Aorta (tissue), 5 donors: ENCODE measurements at regions of chr5 and their contacts with region 1.

Region 1: DNA sequence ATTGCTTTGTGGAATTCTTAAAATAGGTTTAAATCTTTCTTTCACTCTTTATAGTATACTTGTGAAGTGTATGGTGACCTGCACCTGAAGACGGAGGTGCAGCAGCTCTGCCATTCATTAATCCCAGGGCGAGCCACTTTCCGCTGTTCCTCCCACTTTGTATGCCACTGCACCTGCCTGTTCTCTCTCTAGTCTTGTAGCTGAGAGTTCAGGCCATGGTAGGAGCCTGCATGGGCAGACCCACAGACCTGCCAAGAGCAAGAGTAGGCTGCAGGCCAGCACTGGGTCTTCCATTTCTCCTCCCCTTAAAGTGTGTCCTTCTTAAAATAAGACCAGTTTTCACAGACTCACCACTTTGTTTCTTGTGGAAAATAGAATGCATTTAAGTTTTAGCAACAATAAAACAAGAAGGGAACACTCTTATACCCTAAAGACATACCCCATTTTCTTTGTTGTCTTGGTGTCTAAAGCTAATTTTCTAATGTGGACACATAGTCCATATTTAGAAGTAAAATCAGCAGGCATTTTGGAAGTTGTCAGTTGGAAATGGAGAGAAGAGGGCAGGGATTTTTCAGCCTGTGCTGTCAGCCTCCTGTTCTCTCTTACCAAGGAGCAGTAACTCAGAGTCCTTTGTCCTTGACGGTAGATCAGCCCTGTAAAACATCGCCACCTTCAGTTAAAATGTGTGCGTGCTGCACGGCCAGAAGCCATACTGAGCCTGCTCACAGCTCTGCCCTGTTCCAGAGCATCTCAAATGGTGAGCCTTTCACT is 103.2 kb downstream of the SNCAIP start:
- DNase-seq: peak in 1 of 2 donors; percentile 59
- ATAC-seq: peak; percentile 87
- H3K4me3 ChIP-seq: no peak overlapping the region
- H3K27ac ChIP-seq: no peak overlapping the region
- H3K4me1 ChIP-seq: no peaks in the 10 kb centered on the region
- H3K27me3 ChIP-seq: no peaks in the 10 kb centered on the region

Region 2: DNA sequence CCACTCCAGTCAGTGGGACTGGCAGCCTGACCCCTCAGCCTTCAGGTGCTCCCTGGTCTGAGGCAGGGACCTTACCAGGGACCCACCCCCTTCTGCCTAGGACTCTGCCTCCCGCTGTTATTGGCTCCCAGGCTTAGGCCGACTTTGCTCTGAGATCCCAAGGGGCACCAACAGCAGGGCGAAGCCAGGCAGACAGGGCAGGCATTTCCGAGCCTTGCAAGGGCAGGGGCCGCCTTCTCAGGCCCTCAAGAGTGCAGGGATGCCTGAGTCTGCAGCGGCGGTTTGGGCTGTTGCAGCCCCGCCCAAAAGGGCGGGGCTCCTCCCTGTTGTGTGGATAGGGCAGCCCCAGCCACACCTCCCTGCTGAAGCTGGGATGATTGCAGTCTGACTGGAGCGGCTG is 1306.5 kb before region 1 on chr5:
- intact Hi-C with region 1: no loop called
- DNase-seq: peak in 1 of 2 donors; percentile 51
- ATAC-seq: no peak
- H3K4me3 ChIP-seq: no peak overlapping the region
- H3K27ac ChIP-seq: no peak overlapping the region
- H3K4me1 ChIP-seq: no peaks in the 10 kb centered on the region
- H3K27me3 ChIP-seq: no peaks in the 10 kb centered on the region

Region 3: GRCh38 chr5:122192497-122193496 is 222.4 kb before region 1 on chr5:
- intact Hi-C with region 1: loop called (anchors 2 kb)
- DNase-seq: no peak
- ATAC-seq: peak; percentile 68
- H3K4me3 ChIP-seq: no peak overlapping the region
- H3K27ac ChIP-seq: no peak overlapping the region
- H3K4me1 ChIP-seq: no peaks in the 10 kb centered on the region
- H3K27me3 ChIP-seq: no peaks in the 10 kb centered on the region

Region 4: GRCh38 chr5:122291000-122291901 is 124.0 kb before region 1 on chr5:
- intact Hi-C with region 1: loop called in 1 of 2 experiments (anchors 5 kb)
- DNase-seq: no peak
- ATAC-seq: no peak
- H3K4me3 ChIP-seq: no peak overlapping the region
- H3K27ac ChIP-seq: no peak overlapping the region
- H3K4me1 ChIP-seq: no peaks in the 10 kb centered on the region
- H3K27me3 ChIP-seq: no peaks in the 10 kb centered on the region

Region 5: DNA sequence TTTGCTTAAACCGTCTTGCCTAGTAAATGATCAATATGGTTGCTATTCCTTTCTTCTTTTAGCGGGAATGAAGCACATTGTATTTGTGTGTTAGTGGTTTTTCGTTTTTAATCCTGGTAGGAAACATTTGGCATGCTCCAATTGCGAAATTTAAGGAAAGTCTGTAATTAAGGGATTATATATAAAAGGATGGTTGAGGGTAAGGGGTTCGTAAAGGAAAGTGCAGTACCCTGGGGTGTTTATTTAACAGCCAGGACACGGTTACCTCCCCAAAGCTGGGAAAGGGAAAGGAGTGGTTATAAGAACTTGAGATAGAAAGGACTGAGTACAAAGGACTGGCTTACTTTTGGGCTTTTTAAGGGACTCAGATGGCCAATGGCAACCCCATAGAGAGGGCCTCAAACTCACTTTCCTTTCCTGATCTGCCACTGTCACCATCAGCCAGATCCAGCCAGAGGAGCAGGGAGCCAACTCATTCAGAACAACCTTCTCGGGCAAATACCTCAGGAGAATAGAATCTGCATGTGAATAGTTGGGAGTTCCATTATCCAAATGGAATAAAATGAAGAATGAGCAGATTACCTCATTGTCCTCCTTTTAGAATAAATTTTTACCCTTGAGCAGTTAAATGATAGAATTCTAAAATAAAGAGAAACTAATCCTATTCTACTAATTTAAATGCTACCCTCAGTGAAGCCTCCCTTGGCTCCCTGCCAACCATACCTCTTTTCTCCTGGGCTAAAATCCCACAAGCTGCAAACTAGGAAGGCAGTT is 14.5 kb after region 1 on chr5:
- intact Hi-C with region 1: no loop called
- DNase-seq: no peak
- ATAC-seq: no peak
- H3K4me3 ChIP-seq: no peak overlapping the region
- H3K27ac ChIP-seq: no peak overlapping the region
- H3K4me1 ChIP-seq: peaks cover 0 to 4% of the 10 kb centered on the region in 2 donors
- H3K27me3 ChIP-seq: no peaks in the 10 kb centered on the region

Region 6: DNA sequence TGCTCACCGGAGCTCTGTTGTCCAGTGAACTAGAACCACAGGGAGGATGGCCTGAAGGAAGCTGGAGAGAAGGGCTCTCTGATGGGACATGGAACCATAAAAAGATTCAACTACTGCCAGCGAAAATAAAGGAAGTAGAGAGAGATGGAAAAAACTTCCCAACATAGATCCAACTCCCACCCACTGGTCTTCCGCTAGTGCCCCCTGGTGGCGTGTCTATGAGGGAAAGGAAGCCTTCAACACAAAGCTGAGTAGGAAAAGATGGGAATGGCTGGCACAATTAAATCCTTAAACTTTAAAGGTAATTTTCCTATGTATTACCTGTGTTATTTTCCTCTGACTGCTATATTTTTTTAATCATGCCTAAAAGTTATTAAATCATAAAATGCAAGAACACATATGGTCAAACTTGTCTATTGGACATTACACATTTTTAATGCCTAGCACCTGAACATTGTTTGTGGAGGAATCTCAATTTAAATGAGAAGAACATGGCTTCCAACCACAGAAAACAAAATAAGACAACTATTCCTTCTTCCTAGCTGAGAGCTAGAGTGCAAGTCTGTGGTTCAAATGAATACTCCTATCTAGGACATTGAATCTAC is 956.5 kb after region 1 on chr5:
- intact Hi-C with region 1: no loop called
- DNase-seq: peak; percentile 70 to 91
- ATAC-seq: no peak
- H3K4me3 ChIP-seq: no peak overlapping the region
- H3K27ac ChIP-seq: no peak overlapping the region
- H3K4me1 ChIP-seq: no peaks in the 10 kb centered on the region
- H3K27me3 ChIP-seq: no peaks in the 10 kb centered on the region